Mammary epithelial cell (primary cell): ENCODE measurements at regions of chr4 and their contacts with region 1.

Region 1: DNA sequence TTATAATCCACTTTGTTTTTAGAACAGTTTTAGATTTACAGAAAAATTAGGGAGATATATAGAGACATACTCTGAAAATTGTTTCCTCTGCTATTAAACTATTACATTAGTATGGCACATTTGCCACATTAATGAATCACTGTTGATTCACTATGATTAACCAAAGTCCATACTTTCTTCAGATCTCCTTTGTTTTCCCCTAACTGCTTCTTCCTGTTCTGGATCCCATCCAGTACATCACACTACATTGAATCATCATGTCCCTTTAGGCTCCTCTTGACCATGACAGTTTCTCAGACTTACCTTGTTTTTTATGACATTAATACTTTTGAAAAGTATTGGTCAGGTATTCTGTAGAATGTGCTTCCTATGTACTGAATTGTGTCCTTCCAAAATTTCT is 109.2 kb upstream of the EDNRA start:
- DNase-seq: peak; percentile 93
- H3K4me3 ChIP-seq: no peak overlapping the region
- H3K27ac ChIP-seq: peak overlapping the region; percentile 88
- H3K4me1 ChIP-seq: peaks cover 31% of the 10 kb centered on the region
- H3K27me3 ChIP-seq: no peaks in the 10 kb centered on the region
- CTCF ChIP-seq: no peak

Region 2: DNA sequence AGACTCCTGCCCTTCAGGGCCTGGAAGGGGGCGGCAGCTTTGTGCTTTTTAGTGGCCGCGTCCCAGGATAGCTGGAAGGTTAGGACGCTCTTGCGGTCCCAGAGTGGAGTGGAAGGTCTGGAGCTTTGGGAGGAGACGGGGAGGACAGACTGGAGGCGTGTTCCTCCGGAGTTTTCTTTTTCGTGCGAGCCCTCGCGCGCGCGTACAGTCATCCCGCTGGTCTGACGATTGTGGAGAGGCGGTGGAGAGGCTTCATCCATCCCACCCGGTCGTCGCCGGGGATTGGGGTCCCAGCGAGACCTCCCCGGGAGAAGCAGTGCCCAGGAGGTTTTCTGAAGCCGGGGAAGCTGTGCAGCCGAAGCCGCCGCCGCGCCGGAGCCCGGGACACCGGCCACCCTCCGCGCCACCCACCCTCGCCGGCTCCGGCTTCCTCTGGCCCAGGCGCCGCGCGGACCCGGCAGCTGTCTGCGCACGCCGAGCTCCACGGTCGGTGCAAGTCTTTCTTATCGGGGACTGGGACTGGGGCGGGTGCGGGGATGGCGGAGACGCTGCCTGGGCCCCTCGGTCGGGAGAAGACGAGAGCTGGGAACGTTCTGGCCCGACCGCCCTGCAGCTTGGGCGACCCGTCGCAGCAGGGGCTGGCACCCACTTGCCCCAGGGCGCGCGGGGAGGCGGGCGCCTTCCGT is 109.4 kb after region 1 on chr4 and contains the start of gene EDNRA:
- CTCF ChIA-PET with region 1: no interaction called
- dilution Hi-C with region 1: no loop called
- in situ Hi-C with region 1: no loop called
- intact Hi-C with region 1: loop called (anchors 5 kb)
- DNase-seq: no peak
- H3K4me3 ChIP-seq: peak within 1 kb of the TSS; percentile 73 to 78 (median 77)
- H3K27ac ChIP-seq: peak within 1 kb of the TSS; percentile 10
- H3K4me1 ChIP-seq: peaks cover 33% of the 10 kb centered on the region
- H3K27me3 ChIP-seq: no peaks in the 10 kb centered on the region
- CTCF ChIP-seq: no peak
- total RNA-seq, gene EDNRA: 19.2 to 35.4 TPM

Region 3: GRCh38 chr4:147581601-147582350 is 210.1 kb after region 1 on chr4:
- CTCF ChIA-PET with region 1: interaction called, 7 read pairs
- dilution Hi-C with region 1: no loop called
- in situ Hi-C with region 1: no loop called
- intact Hi-C with region 1: loop called (anchors 2 kb)
- DNase-seq: peak; percentile 64
- H3K4me3 ChIP-seq: no peak overlapping the region
- H3K27ac ChIP-seq: peak overlapping the region; percentile 39
- H3K4me1 ChIP-seq: peaks cover 50% of the 10 kb centered on the region
- H3K27me3 ChIP-seq: no peaks in the 10 kb centered on the region
- CTCF ChIP-seq: no peak